Endothelial cell of umbilical vein (primary cell): ENCODE measurements at regions of chrX and their contacts with region 1.

Region 1: DNA sequence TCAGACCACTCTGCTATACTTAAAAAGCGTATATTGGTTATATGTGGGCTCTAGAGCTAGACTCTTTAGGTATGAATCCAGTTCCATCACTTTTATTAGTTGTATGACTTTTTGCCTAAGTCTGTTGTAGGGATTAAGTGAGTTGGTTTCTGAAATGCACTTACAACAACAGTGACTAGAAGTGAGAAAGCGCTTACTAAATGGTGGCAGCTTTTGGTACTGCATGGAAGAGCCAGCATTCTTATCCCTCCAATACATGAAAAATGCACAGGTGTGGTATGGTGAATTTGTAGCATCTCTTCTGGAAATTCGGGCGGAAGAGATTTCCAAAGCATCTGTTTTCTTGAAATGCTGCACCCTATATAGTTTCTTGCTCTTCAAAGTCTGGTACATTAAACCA is 117.1 kb downstream of the SPANXA1 start:
- DNase-seq: peak; percentile 2
- H3K4me3 ChIP-seq: no peak overlapping the region
- H3K27ac ChIP-seq: no peak overlapping the region
- H3K4me1 ChIP-seq: peaks cover 21% of the 10 kb centered on the region
- H3K27me3 ChIP-seq: no peaks in the 10 kb centered on the region
- CTCF ChIP-seq: peak in 1 of 2 donors; percentile 3
- POLR2A ChIP-seq: no peak

Region 2: DNA sequence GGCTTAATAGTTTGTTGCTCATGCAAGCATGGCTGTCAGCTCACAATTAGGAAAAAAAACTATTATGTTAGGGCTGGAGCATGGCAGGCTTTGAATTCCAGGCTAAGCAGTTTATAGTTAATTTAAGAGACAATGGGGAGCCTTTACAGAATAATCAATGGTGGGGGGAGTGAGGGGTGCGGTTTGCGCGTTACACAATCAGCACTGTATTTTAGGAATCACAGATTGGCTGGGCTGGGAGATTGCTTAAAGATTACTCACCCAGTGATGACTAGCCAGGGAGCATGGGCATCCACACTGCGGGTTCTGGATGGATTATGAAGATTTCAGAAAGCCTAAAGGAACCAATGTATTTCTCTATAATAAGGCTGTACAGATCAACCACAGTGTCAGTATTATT is 1149.1 kb before region 1 on chrX:
- CTCF ChIA-PET with region 1: no interaction called
- POLR2A ChIA-PET with region 1: no interaction called
- dilution Hi-C with region 1: no loop called
- intact Hi-C with region 1: no loop called
- DNase-seq: no peak
- H3K4me3 ChIP-seq: no peak overlapping the region
- H3K27ac ChIP-seq: no peak overlapping the region
- H3K4me1 ChIP-seq: no peaks in the 10 kb centered on the region
- H3K27me3 ChIP-seq: no peaks in the 10 kb centered on the region
- CTCF ChIP-seq: no peak
- POLR2A ChIP-seq: no peak

Region 3: DNA sequence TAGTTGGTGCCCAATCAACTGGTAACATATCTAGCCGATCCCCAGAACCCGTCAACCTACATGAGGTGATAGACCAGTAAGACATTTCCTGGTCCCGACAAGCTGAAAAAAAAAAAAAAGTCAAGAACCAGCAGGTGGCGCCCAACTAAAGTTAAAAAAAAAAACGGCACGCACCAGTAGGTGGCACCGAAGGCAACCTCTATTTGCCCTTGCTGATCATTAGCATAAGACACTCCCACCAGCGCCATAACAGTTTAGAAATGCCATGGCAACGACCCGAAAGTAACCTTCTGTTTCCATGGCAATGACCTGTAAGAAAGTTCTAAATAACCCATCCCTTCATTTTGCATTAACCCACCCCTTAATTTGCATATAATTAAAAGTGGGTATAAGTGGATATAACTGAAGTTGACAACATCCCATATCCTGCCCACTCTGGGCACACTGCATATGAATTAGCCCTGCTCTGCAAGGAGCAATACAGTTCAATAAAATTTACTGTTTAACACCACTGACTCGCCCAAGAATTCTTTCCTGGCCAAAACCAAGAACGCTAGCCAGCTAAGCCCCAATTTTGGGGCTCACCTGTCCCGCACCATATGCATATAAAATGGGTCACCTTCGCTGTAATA is 548.9 kb before region 1 on chrX:
- CTCF ChIA-PET with region 1: interaction called, 5 read pairs
- POLR2A ChIA-PET with region 1: no interaction called
- dilution Hi-C with region 1: no loop called
- intact Hi-C with region 1: loop called (anchors 1 kb)
- DNase-seq: peak; percentile 57
- H3K4me3 ChIP-seq: no peak overlapping the region
- H3K27ac ChIP-seq: peak overlapping the region; percentile 31
- H3K4me1 ChIP-seq: no peaks in the 10 kb centered on the region
- H3K27me3 ChIP-seq: no peaks in the 10 kb centered on the region
- CTCF ChIP-seq: peak; percentile 46 to 49
- POLR2A ChIP-seq: no peak

Region 4: DNA sequence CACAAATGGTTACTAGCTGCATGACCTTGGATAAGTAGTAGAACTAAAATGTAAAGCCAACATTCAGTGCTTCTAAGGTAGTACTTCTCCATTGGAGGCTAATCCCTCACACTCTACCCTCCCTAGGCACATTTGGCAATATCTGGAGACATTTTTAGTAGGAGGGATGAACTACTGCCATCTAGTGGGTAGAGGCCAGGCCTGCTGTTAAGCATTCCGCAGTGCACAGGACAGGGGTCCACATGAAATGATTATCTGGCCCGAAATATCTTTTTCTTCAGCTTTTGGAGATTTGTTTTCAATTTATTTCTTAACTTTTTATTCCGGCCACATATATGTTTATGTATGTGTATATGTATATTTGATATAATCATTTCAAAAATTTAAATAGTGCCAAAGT is 189.1 kb before region 1 on chrX:
- CTCF ChIA-PET with region 1: no interaction called
- POLR2A ChIA-PET with region 1: no interaction called
- dilution Hi-C with region 1: no loop called
- intact Hi-C with region 1: loop called (anchors 1 kb)
- DNase-seq: peak; percentile 29
- H3K4me3 ChIP-seq: no peak overlapping the region
- H3K27ac ChIP-seq: no peak overlapping the region
- H3K4me1 ChIP-seq: no peaks in the 10 kb centered on the region
- H3K27me3 ChIP-seq: no peaks in the 10 kb centered on the region
- CTCF ChIP-seq: peak; percentile 59 to 61
- POLR2A ChIP-seq: no peak

Region 5: DNA sequence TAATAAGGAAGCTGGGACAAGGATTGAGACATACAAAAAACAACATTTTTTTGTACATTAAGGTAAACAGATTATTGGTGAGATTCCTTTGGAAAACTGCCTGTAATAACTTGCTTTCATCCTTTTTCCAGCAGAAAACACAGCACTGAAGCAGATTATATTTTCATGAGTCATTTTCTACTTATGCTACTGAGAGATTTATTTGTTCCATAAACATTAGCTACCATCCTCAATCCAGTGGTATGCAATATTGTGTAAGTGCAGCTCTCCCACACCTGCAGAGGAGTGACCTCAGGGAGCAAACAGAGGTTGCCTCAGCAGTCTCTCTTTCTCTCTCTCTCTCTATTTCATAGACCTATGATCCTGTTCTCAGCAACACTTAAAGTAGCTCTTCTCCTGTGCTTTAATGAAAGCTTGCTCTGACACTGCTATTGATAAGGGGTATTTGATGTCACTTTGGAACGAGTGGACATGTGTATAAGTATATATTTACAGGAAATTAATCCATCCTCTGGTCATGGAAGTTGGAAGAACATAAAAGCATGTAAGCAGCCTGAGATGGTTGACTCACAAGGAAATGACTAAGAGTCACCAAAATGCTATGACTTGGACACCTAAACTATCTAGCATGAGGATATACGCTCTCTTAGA is 61.5 kb before region 1 on chrX:
- CTCF ChIA-PET with region 1: interaction called, 5 read pairs
- POLR2A ChIA-PET with region 1: interaction called, 6 read pairs
- dilution Hi-C with region 1: no loop called
- intact Hi-C with region 1: loop called (anchors 1 kb)
- DNase-seq: no peak
- H3K4me3 ChIP-seq: no peak overlapping the region
- H3K27ac ChIP-seq: peak overlapping the region; percentile 89
- H3K4me1 ChIP-seq: peaks cover 20% of the 10 kb centered on the region
- H3K27me3 ChIP-seq: no peaks in the 10 kb centered on the region
- CTCF ChIP-seq: no peak
- POLR2A ChIP-seq: no peak